K562 (cell line): ENCODE measurements at regions of chr4 and their contacts with region 1.

Region 1: DNA sequence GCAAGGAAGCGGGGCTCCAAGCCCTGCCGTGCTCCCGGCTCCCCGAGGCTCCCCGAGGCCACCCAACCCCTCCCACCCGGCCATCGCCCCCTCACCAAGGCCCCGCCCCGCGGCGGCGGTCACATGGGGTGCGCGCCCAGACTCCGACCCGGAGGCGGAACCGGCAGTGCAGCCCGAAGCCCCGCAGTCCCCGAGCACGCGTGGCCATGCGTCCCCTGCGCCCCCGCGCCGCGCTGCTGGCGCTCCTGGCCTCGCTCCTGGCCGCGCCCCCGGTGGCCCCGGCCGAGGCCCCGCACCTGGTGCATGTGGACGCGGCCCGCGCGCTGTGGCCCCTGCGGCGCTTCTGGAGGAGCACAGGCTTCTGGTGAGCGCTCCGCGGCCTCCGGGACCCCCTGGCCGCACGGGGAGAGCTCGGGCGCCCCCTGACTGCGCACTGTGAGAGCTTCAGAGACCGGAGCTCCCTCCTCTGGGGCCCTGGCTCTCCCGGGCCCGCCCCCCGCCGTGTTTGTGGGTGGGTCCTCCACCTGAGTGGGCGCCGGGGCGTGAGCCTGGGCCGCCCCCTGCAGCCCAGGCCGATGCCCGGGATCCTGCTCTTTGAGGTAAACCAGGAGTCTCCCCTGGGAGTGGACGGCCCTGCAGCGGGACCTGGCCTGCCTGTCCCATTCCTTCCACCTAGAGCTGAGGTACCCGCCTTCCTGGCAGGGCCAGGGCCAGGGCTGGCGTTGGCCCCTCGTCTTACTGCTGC is at the start of gene IDUA:
- DNase-seq: peak; percentile 88 to 94 (median 90)
- ATAC-seq: peak; percentile 89
- H3K4me3 ChIP-seq: peak within 1 kb of the TSS; percentile 68
- H3K27ac ChIP-seq: peak within 1 kb of the TSS; percentile 79
- H3K4me1 ChIP-seq: peaks cover 19 to 68% of the 10 kb centered on the region in 2 experiments; a peak in 4 of 5 replicates
- H3K27me3 ChIP-seq: no peaks in the 10 kb centered on the region
- CTCF ChIP-seq: peak; percentile 65 to 90 (median 83)
- EP300 ChIP-seq: no peak
- POLR2A ChIP-seq: peak; percentile 16; the same call in 1 of the 2 replicates
- RAD21 ChIP-seq: peak; percentile 79 to 83
- polyA plus RNA-seq, gene IDUA: 0.04 to 0.13 TPM

Region 2: DNA sequence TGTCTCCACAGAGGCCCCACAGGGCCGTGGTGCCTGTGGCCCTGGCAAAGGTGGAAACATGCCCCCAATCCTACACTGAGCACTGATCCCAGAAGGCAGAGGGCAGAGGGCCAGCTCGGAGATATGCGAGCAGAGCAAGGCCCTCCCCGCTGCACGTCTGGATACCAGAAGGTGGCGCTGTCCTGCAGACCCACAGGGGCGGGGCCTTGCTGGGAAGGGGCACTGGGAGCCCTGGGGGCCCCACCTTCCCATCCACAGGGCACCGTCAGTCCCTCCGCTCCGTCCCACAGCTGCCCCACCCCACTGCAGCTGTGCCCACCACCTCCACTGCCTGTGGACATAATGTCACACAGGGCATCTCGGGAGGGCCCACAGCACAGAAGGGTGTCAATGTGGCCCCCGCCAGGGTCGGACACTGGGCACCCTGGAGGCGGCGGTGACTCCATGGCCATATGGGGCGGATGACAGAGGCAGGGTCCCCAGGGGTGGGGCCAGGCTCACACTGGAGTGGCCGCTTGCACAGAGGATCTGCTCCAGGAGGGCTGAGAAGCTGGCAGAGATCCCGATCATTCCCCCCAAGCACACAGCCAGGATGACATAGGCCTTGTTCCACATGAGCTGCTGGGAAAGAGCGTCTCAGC is 302.9 kb before region 1 on chr4:
- CTCF ChIA-PET with region 1: no interaction called
- POLR2A ChIA-PET with region 1: no interaction called
- in situ Hi-C with region 1: no loop called
- intact Hi-C with region 1: loop called (anchors 10 kb)
- DNase-seq: peak; percentile 69 to 83 (median 74)
- ATAC-seq: peak; percentile 68
- H3K4me3 ChIP-seq: no peak overlapping the region
- H3K27ac ChIP-seq: no peak overlapping the region
- H3K4me1 ChIP-seq: peaks cover 25 to 94% of the 10 kb centered on the region in 2 experiments
- H3K27me3 ChIP-seq: no peaks in the 10 kb centered on the region
- CTCF ChIP-seq: peak; percentile 82 to 85 (median 84)
- EP300 ChIP-seq: no peak
- POLR2A ChIP-seq: no peak
- RAD21 ChIP-seq: peak; percentile 8 to 66; a peak in 2 of 4 replicates

Region 3: DNA sequence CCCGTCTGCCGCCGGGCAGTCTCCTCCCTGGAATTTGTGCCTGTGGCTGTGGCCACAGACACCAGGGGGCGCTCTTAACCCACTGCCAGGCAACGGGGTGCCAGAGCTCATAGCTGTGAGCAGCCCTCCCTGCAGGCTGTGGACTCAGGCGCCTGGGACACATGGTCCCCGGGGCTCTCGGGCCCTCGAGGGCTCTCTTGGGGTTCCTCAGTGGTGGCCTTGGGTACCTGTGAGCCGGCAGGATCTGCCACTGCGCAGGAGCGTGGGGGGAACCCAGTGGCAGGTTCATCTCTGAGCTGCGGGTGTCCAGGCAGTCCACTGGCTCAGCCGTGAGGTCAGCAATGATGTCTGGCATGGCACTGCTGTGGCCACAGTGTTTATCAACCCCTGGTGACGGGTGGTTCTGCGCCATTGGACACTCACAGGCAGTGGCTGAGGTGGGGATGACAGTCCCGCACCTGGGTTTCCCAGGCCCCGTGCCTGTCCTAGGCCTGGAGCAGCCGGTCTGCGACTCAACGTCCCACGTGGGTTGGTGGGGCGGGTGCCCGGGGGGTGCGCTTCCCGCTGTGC is 244.2 kb before region 1 on chr4:
- CTCF ChIA-PET with region 1: interaction called, 5 read pairs
- POLR2A ChIA-PET with region 1: no interaction called
- in situ Hi-C with region 1: no loop called
- intact Hi-C with region 1: loop called (anchors 5 kb)
- DNase-seq: peak; percentile 75 to 77 (median 76)
- ATAC-seq: peak; percentile 99
- H3K4me3 ChIP-seq: no peak overlapping the region
- H3K27ac ChIP-seq: no peak overlapping the region
- H3K4me1 ChIP-seq: peaks cover 0 to 25% of the 10 kb centered on the region in 2 experiments; a peak in 2 of 5 replicates
- H3K27me3 ChIP-seq: no peaks in the 10 kb centered on the region
- CTCF ChIP-seq: peak; percentile 86 to 92 (median 86)
- EP300 ChIP-seq: no peak
- POLR2A ChIP-seq: no peak
- RAD21 ChIP-seq: peak; percentile 48 to 80

Region 4: GRCh38 chr4:762211-763190 is 224.6 kb before region 1 on chr4:
- CTCF ChIA-PET with region 1: no interaction called
- POLR2A ChIA-PET with region 1: no interaction called
- in situ Hi-C with region 1: no loop called
- intact Hi-C with region 1: loop called (anchors 10 kb)
- DNase-seq: no peak
- ATAC-seq: peak; percentile 19; the same call in 1 of the 3 replicates
- H3K4me3 ChIP-seq: no peak overlapping the region
- H3K27ac ChIP-seq: no peak overlapping the region
- H3K4me1 ChIP-seq: peaks cover 0 to 14% of the 10 kb centered on the region in 2 experiments; a peak in 2 of 5 replicates
- H3K27me3 ChIP-seq: no peaks in the 10 kb centered on the region
- CTCF ChIP-seq: peak in 2 of 3 experiments; percentile 14 to 24; a peak in 2 of 6 replicates
- EP300 ChIP-seq: no peak
- POLR2A ChIP-seq: 0 out of 2 replicates have a peak, but pooled peaks have one; percentile 10
- RAD21 ChIP-seq: no peak

Region 5: DNA sequence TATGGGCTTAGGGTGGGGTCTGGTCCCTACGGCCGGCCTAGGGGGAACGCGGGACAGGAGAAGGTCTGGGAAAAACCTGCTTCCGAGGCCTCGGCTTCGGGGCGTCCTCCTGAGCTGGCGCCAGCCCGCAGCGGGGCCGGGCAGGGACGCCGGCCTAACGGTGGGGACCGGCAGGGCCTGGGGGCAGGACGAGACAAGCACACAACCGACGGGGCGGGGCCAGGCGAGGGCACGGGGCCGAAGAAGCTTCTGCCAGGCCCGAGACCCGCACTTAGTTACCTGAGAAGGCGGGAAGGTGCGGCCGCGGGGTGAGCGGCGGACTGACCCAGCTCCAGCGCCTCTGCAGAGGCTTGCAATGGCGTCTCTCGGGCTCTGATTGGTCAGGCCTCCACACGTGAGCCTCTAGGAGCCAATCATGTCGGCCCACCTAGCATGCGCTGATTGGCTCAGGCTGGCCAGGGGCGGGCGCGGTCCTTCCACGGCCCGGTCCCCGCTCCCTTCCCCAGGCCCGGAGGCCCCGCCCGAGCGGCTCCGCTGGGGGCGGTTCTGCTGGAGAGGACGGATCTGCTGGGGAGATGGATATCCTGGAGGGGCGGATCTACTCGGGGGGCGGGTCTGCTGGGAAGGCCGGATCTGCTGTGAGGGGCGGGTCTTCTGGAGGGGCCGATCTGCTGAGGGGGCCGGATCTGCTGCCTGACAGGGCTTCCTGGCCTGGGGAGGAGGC is 205.4 kb before region 1 on chr4:
- CTCF ChIA-PET with region 1: no interaction called
- POLR2A ChIA-PET with region 1: interaction called, 3 read pairs
- in situ Hi-C with region 1: no loop called
- intact Hi-C with region 1: loop called (anchors 5 kb)
- DNase-seq: peak; percentile 98 to 100 (median 99)
- ATAC-seq: peak; percentile 99
- H3K4me3 ChIP-seq: peak overlapping the region; percentile 100
- H3K27ac ChIP-seq: peak overlapping the region; percentile 99
- H3K4me1 ChIP-seq: peaks cover 12 to 49% of the 10 kb centered on the region in 2 experiments; a peak in 4 of 5 replicates
- H3K27me3 ChIP-seq: no peaks in the 10 kb centered on the region
- CTCF ChIP-seq: no peak
- EP300 ChIP-seq: no peak
- POLR2A ChIP-seq: peak; percentile 96
- RAD21 ChIP-seq: no peak; a peak in 1 of 4 replicates

Region 6: GRCh38 chr4:931960-932712 is 54.9 kb before region 1 on chr4 and contains the starts of genes GAK and TMEM175:
- CTCF ChIA-PET with region 1: no interaction called
- POLR2A ChIA-PET with region 1: interaction called, 3 read pairs
- in situ Hi-C with region 1: no loop called
- intact Hi-C with region 1: loop called (anchors 2 kb)
- DNase-seq: peak; percentile 97 to 99 (median 98)
- ATAC-seq: peak; percentile 94
- H3K4me3 ChIP-seq: peak within 1 kb of the TSS; percentile 99
- H3K27ac ChIP-seq: peak within 1 kb of the TSS; percentile 93
- H3K4me1 ChIP-seq: peaks cover 13 to 14% of the 10 kb centered on the region in 2 experiments
- H3K27me3 ChIP-seq: no peaks in the 10 kb centered on the region
- CTCF ChIP-seq: no peak
- EP300 ChIP-seq: peak; percentile 35; the same call in 1 of the 2 replicates
- POLR2A ChIP-seq: peak; percentile 91
- RAD21 ChIP-seq: no peak
- polyA plus RNA-seq, gene GAK: 1.3 to 2.1 TPM
- polyA plus RNA-seq, gene TMEM175: 0.13 to 0.18 TPM